HCT116 (cell line): ENCODE measurements at regions of chr3 and their contacts with region 1.

Region 1: DNA sequence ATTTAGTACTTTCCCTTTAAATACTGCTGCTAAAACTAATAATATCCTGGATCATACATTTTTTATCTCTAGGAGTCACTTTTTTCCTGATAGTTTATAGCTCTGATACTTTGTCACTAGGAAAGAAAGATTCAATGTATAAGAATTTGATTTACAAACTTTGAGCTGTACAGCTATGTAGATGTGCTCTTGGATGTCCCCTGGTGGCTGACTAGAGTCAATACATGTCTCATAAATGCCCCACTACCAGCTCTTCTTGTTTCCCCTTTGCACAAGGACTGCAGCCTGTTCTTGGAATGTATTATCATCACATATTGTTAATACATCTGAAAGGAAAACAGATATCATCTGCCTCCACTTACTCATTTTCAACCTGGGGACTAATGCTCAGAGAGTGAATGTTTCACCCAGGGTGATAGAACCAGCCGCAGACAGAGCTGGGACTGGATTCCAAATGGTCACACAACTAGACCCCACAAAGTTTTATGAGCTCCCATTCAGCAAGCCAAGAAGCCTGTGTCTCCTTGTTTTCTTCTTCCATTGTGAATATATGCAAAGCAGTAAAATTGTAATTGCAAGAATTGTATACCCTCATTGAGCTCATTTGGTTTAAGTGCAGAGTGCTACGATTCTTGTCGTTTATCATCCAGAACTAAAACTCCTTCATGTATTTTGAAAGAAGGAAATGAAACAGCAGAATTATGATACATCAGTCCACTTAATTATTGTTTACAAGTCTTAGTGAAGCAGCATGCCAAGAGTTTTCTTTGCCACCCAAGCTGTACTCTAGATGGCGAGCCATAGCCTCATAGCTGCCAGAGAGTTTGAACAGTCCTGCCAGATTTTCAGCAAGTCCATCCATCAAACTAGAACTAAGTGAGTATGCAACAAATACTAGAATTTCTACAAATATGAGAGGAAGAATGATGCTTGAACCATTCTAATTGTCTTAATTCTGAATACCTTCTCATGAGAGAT is 261.6 kb upstream of the LMCD1 start:
- DNase-seq: peak; percentile 48
- ATAC-seq: peak; percentile 93
- H3K4me3 ChIP-seq: no peak overlapping the region
- H3K27ac ChIP-seq: no peak overlapping the region
- H3K4me1 ChIP-seq: no peaks in the 10 kb centered on the region
- H3K27me3 ChIP-seq: no peaks in the 10 kb centered on the region
- CTCF ChIP-seq: peak; percentile 53 to 93 (median 88)
- POLR2A ChIP-seq: no peak
- RAD21 ChIP-seq: peak; percentile 56

Region 2: GRCh38 chr3:7285505-7285904 is 954.5 kb before region 1 on chr3:
- CTCF ChIA-PET with region 1: interaction called, 3 read pairs
- POLR2A ChIA-PET with region 1: no interaction called
- RAD21 ChIA-PET with region 1: no interaction called
- intact Hi-C with region 1: loop called (anchors 5 kb)
- DNase-seq: peak; percentile 10
- ATAC-seq: peak; percentile 79
- H3K4me3 ChIP-seq: no peak overlapping the region
- H3K27ac ChIP-seq: no peak overlapping the region
- H3K4me1 ChIP-seq: no peaks in the 10 kb centered on the region
- H3K27me3 ChIP-seq: no peaks in the 10 kb centered on the region
- CTCF ChIP-seq: peak; percentile 11 to 39 (median 23); a peak in 3 of 6 replicates
- POLR2A ChIP-seq: no peak
- RAD21 ChIP-seq: peak; percentile 62

Region 3: GRCh38 chr3:8223766-8224165 is 16.2 kb before region 1 on chr3:
- CTCF ChIA-PET with region 1: interaction called, 23 read pairs
- POLR2A ChIA-PET with region 1: no interaction called
- RAD21 ChIA-PET with region 1: no interaction called
- intact Hi-C with region 1: no loop called
- DNase-seq: no peak
- ATAC-seq: no peak
- H3K4me3 ChIP-seq: no peak overlapping the region
- H3K27ac ChIP-seq: no peak overlapping the region
- H3K4me1 ChIP-seq: no peaks in the 10 kb centered on the region
- H3K27me3 ChIP-seq: no peaks in the 10 kb centered on the region
- CTCF ChIP-seq: no peak
- POLR2A ChIP-seq: no peak
- RAD21 ChIP-seq: no peak

Region 4: DNA sequence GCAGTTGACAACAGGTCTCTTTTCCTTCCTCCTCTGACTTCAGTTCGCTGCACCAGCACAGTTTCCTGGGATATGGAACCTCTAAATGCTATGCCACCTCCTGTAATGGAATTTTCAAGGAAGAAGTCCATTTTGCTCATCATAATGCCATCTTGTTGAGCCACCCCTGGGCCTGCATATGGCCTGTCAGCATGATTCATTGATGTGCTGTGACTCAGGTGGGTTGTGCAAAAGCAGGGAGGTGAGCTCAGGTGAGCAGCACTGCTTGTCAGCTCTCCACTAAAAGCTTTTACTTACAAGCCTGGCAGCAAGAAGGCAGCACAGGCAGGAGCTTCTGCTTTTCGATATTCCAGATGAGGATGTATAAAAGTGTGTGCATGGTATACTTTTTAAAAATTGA is 14.5 kb after region 1 on chr3:
- CTCF ChIA-PET with region 1: interaction called, 10 read pairs
- POLR2A ChIA-PET with region 1: no interaction called
- RAD21 ChIA-PET with region 1: no interaction called
- intact Hi-C with region 1: no loop called
- DNase-seq: no peak
- ATAC-seq: no peak
- H3K4me3 ChIP-seq: no peak overlapping the region
- H3K27ac ChIP-seq: no peak overlapping the region
- H3K4me1 ChIP-seq: no peaks in the 10 kb centered on the region
- H3K27me3 ChIP-seq: no peaks in the 10 kb centered on the region
- CTCF ChIP-seq: no peak
- POLR2A ChIP-seq: no peak
- RAD21 ChIP-seq: no peak

Region 5: GRCh38 chr3:8416965-8417364 is 177.0 kb after region 1 on chr3:
- CTCF ChIA-PET with region 1: interaction called, 13 read pairs
- POLR2A ChIA-PET with region 1: no interaction called
- RAD21 ChIA-PET with region 1: no interaction called
- intact Hi-C with region 1: no loop called
- DNase-seq: peak; percentile 6
- ATAC-seq: peak; percentile 90
- H3K4me3 ChIP-seq: no peak overlapping the region
- H3K27ac ChIP-seq: no peak overlapping the region
- H3K4me1 ChIP-seq: peaks cover 3 to 4% of the 10 kb centered on the region in 2 experiments; a peak in 2 of 4 replicates
- H3K27me3 ChIP-seq: no peaks in the 10 kb centered on the region; the same call in 1 of the 2 replicates
- CTCF ChIP-seq: no peak
- POLR2A ChIP-seq: no peak
- RAD21 ChIP-seq: no peak